GM12878 (cell line): ENCODE measurements at regions of chr14 and their contacts with region 1.

Region 1: GRCh38 chr14:95495538-95496025 is 20.9 kb downstream of the SYNE3 start:
- DNase-seq: peak; percentile 94
- ATAC-seq: peak; percentile 90
- H3K4me3 ChIP-seq: peak overlapping the region; percentile 37; the same call in 1 of the 2 replicates
- H3K27ac ChIP-seq: peak overlapping the region; percentile 98
- H3K4me1 ChIP-seq: peaks cover 60% of the 10 kb centered on the region
- H3K27me3 ChIP-seq: no peaks in the 10 kb centered on the region
- CTCF ChIP-seq: no peak
- EP300 ChIP-seq: peak; percentile 66 to 95
- POLR2A ChIP-seq: peak; percentile 66
- RAD21 ChIP-seq: peak; percentile 17; the same call in 1 of the 2 replicates

Region 2: DNA sequence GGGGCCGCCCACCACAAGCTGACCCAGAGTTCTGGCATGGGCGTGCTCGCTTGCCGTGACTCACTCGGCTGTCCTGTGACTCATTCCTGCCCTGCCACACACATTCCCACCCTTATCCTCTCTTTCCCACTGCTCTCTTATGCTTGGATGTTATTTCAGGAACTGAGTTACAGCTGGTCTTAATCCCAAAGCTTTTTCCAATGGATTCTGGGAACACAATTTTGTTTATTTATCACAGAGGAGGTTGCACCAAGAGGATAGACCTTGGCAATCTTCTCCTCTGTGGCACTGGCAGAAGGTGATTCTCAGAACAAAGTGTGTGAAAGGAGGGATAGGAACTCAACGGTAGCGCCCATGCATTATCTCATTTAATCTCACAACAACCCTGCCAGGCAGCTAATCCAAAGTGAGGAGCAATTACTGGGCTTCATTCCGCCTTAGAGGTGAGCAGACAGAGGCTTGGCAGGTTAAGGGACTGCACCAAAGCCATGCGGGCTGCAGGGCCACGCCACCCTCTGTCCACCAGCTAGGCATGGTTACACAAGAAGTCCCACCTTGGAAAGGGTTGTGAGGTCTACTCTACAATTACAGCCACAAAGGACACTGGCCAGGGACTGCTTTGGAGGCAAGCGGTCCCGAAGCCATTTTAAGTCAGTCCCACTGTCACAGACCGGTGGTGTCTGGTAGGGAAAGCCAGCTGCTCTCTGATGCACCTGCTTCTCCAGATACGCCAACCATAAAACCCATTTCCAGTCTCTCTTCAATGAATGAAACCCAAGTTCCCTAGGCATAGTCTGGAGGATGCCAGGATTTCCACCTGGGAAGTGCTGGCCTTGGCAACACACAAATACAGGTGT is 12.0 kb before region 1 on chr14:
- CTCF ChIA-PET with region 1: interaction called, 6 read pairs
- POLR2A ChIA-PET with region 1: interaction called, 6 read pairs
- RAD21 ChIA-PET with region 1: interaction called, 20 read pairs
- SMC1A ChIA-PET with region 1: interaction called, 30 read pairs
- in situ Hi-C with region 1: no loop called
- intact Hi-C with region 1: loop called (anchors 2 kb)
- DNase-seq: no peak
- ATAC-seq: no peak
- H3K4me3 ChIP-seq: no peak overlapping the region
- H3K27ac ChIP-seq: no peak overlapping the region
- H3K4me1 ChIP-seq: peaks cover 24% of the 10 kb centered on the region
- H3K27me3 ChIP-seq: no peaks in the 10 kb centered on the region
- CTCF ChIP-seq: no peak
- EP300 ChIP-seq: no peak
- POLR2A ChIP-seq: no peak
- RAD21 ChIP-seq: no peak